H1 (cell line): ENCODE measurements at regions of chr10 and their contacts with region 1.

Region 1: DNA sequence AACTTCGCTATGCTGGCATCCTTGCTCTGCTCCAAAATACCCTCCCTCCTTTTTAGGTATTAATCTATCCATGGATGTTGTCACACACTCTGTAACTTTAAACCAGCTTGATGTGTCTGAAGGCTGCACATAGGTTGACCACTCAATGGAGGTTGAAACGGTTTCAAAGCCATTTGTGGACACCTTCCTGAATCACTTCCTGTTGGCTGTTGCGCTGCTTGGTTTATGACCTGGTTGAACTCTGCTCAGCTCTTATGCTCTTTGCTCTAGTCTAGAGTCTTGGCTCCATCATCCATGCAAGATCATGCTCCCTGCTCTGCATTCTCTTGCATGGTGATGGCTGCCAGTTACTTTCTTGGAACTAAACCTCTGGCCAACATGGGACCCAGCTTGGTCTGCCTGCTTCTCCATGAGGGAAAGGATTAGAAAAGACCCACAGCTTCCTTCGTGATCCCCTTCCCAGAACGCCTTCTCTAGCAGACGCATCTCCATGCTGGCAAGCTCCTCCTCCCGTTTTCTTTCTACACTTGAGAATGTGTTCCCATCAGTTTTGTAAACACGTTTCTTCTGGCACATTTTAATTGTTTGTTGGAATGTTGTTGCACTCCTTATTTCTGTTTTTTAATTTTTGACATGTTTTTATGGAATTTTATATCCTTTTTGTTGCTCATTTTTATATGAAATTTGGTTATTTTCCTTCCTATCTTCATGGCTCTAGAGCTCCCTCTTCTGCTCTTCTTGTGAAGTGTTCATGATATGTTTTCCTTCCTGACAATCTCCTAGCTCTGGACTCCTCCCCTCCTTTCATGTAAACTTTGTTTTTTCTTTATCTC is 149.8 kb downstream of the XPNPEP1 start:
- DNase-seq: no peak
- H3K4me3 ChIP-seq: no peak overlapping the region
- H3K27ac ChIP-seq: no peak overlapping the region
- H3K4me1 ChIP-seq: peaks cover 0 to 1% (median 0%) of the 10 kb centered on the region in 4 experiments; a peak in 2 of 7 replicates
- H3K27me3 ChIP-seq: no peaks in the 10 kb centered on the region
- CTCF ChIP-seq: peak in 2 of 3 experiments; percentile 41 to 49; a peak in 2 of 4 replicates
- EP300 ChIP-seq: no peak
- POLR2A ChIP-seq: no peak
- RAD21 ChIP-seq: peak; percentile 66 to 69

Region 2: GRCh38 chr10:109450702-109451101 is 322.8 kb before region 1 on chr10:
- CTCF ChIA-PET with region 1: interaction called, 16 read pairs
- POLR2A ChIA-PET with region 1: no interaction called
- DNase-seq: no peak
- H3K4me3 ChIP-seq: no peak overlapping the region
- H3K27ac ChIP-seq: no peak overlapping the region
- H3K4me1 ChIP-seq: no peaks in the 10 kb centered on the region
- H3K27me3 ChIP-seq: peaks cover 0 to 4% (median 3%) of the 10 kb centered on the region in 4 experiments; a peak in 5 of 7 replicates
- CTCF ChIP-seq: no peak
- EP300 ChIP-seq: no peak
- POLR2A ChIP-seq: no peak
- RAD21 ChIP-seq: no peak

Region 3: GRCh38 chr10:109456566-109457301 is 316.8 kb before region 1 on chr10:
- CTCF ChIA-PET with region 1: interaction called, 16 read pairs
- POLR2A ChIA-PET with region 1: no interaction called
- DNase-seq: peak in 1 of 2 experiments; percentile 75
- H3K4me3 ChIP-seq: peak overlapping the region; percentile 54 to 77 (median 62)
- H3K27ac ChIP-seq: no peak overlapping the region
- H3K4me1 ChIP-seq: no peaks in the 10 kb centered on the region; a peak in 1 of 7 replicates
- H3K27me3 ChIP-seq: peaks cover 2 to 25% (median 22%) of the 10 kb centered on the region in 4 experiments
- CTCF ChIP-seq: no peak
- EP300 ChIP-seq: 0 out of 3 replicates have a peak, but pooled peaks of 1 of the 2 experiments have one; percentile 6
- POLR2A ChIP-seq: no peak
- RAD21 ChIP-seq: peak in 1 of 2 experiments; percentile 10; a peak in 1 of 4 replicates

Region 4: DNA sequence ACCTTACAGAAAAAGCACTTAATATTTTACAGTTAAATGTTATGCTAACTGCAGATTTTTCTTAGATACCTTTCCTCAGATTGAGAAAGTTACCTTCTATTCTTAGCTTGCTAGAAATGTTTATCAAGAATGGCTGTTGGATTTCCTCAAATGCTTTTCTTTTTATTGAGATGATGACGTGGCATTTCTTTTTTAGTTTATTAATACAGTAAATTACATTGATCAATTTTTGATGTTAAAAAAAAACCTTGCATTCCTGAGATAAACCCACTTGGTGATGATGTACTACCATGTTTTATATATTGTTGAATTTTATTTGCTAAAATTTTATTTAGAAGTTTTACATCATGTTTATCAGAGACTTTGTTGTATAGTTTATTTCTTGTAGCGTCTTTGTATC is 58.6 kb before region 1 on chr10:
- CTCF ChIA-PET with region 1: interaction called, 10 read pairs
- POLR2A ChIA-PET with region 1: no interaction called
- DNase-seq: no peak
- H3K4me3 ChIP-seq: no peak overlapping the region
- H3K27ac ChIP-seq: no peak overlapping the region
- H3K4me1 ChIP-seq: no peaks in the 10 kb centered on the region
- H3K27me3 ChIP-seq: no peaks in the 10 kb centered on the region
- CTCF ChIP-seq: no peak
- EP300 ChIP-seq: no peak
- POLR2A ChIP-seq: no peak
- RAD21 ChIP-seq: no peak

Region 5: DNA sequence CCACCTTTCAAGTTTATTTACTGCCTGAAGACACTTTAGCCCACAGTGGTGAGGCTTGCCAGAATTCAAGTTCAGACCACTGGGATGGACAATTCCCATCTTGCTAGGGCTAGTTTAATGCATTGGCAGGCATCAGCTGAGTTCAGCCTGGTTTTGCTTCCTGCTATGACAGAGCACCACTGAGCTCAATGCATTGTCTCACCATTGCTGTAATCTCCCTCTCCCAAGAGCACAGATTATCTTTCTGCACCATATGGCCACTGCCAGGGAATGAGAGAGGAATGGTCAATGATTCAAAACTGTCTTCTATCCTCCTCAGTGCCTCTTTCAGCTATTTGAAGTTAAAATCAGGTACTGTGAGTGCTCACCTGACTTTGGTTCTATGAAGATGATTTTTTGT is 10.9 kb before region 1 on chr10:
- CTCF ChIA-PET with region 1: interaction called, 24 read pairs
- POLR2A ChIA-PET with region 1: interaction called, 3 read pairs
- DNase-seq: no peak
- H3K4me3 ChIP-seq: no peak overlapping the region
- H3K27ac ChIP-seq: no peak overlapping the region
- H3K4me1 ChIP-seq: no peaks in the 10 kb centered on the region
- H3K27me3 ChIP-seq: no peaks in the 10 kb centered on the region
- CTCF ChIP-seq: no peak
- EP300 ChIP-seq: no peak
- POLR2A ChIP-seq: no peak
- RAD21 ChIP-seq: no peak

Region 6: DNA sequence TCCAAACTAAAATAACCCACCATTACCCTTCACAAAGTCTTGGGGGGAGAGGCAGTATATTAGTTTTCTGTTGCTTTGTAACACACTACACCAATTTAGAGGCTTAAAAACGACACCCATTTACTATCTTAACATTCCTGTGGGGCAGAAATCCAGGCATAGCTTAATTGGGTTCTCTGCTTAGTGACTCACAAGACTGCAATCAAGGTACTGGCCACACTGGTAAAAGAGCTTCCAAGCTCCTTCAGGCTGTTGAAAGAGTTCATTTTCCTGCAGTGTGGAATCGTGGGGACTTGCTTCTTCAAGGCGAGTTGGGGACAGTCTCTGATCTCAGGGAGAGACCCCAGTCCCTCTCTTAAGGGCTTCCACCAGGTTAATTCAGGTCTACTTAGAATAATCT is 10.7 kb after region 1 on chr10:
- CTCF ChIA-PET with region 1: interaction called, 30 read pairs
- POLR2A ChIA-PET with region 1: no interaction called
- DNase-seq: no peak
- H3K4me3 ChIP-seq: no peak overlapping the region
- H3K27ac ChIP-seq: no peak overlapping the region
- H3K4me1 ChIP-seq: peaks cover 3 to 13% (median 6%) of the 10 kb centered on the region in 4 experiments; a peak in 6 of 7 replicates
- H3K27me3 ChIP-seq: no peaks in the 10 kb centered on the region; a peak in 1 of 7 replicates
- CTCF ChIP-seq: no peak
- EP300 ChIP-seq: no peak
- POLR2A ChIP-seq: no peak
- RAD21 ChIP-seq: no peak

Region 7: GRCh38 chr10:109819807-109820206 is 46.3 kb after region 1 on chr10:
- CTCF ChIA-PET with region 1: no interaction called
- POLR2A ChIA-PET with region 1: no interaction called
- DNase-seq: no peak
- H3K4me3 ChIP-seq: no peak overlapping the region
- H3K27ac ChIP-seq: no peak overlapping the region
- H3K4me1 ChIP-seq: 0 out of 7 replicates have a peak, but pooled peaks cover 0 to 2% (median 0%) of the 10 kb centered on the region in 4 experiments
- H3K27me3 ChIP-seq: no peaks in the 10 kb centered on the region
- CTCF ChIP-seq: no peak
- EP300 ChIP-seq: no peak
- POLR2A ChIP-seq: no peak
- RAD21 ChIP-seq: no peak

Region 8: DNA sequence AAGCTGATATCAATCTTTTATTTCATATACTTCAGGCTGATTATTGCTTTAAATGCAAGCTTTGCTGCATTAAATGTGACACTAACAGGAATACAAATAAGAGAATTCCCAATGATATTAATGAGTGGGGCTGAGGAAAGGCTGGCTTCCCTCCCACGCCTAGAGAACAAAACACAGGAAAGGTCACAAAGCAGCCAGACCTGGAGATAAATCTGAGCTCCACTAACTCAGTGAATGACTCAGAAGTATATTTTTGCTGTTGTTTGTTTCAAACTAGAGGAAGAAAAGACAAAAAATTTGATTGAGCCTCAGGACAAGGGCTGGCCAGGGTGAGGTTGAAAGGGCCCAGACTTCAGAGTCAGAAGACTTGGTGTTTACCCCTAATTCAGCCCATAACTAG is 61.8 kb after region 1 on chr10:
- CTCF ChIA-PET with region 1: no interaction called
- POLR2A ChIA-PET with region 1: no interaction called
- DNase-seq: no peak
- H3K4me3 ChIP-seq: no peak overlapping the region
- H3K27ac ChIP-seq: no peak overlapping the region
- H3K4me1 ChIP-seq: no peaks in the 10 kb centered on the region
- H3K27me3 ChIP-seq: no peaks in the 10 kb centered on the region
- CTCF ChIP-seq: no peak
- EP300 ChIP-seq: no peak
- POLR2A ChIP-seq: no peak
- RAD21 ChIP-seq: no peak

Region 9: DNA sequence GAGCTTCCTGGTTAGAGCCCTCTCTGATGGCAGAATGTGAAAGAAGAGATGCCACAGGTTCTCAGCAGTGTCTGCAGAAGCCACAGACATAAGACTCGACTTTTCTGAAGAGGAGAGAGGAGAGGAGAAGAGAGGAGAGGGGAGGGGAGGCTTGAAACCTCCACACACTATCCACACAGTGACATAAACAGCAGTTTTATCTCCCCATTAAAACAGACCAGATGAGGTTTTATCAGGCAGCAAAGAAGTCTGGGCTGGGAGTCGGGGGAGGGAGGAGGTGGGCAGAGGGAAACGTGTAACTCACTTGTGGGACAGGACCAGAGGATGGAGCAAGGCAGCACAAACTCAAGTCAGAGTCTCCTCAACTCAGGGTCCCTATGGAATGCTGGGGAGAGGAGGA is 73.3 kb after region 1 on chr10:
- CTCF ChIA-PET with region 1: interaction called, 11 read pairs
- POLR2A ChIA-PET with region 1: no interaction called
- DNase-seq: no peak
- H3K4me3 ChIP-seq: no peak overlapping the region
- H3K27ac ChIP-seq: no peak overlapping the region
- H3K4me1 ChIP-seq: no peaks in the 10 kb centered on the region
- H3K27me3 ChIP-seq: no peaks in the 10 kb centered on the region
- CTCF ChIP-seq: no peak
- EP300 ChIP-seq: no peak
- POLR2A ChIP-seq: no peak
- RAD21 ChIP-seq: no peak

Region 10: DNA sequence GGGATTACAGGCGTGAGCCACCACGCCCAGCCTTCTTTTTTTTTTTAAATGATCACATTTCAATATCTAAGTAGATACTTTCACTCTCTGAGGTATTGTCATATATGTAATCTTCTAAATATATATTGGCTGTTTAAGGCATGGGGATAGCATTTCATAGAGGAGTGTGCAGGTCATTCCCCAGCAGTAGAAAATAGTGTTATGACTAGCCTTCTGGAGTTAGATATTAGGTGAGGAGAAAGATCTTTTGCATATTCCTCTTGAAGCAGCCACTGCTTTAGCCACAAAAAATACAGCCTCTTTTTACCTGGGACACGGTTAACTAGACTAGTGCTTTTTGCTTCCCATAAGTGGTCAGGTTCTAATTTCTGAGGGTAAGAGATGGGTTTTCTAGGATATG is 263.1 kb after region 1 on chr10:
- CTCF ChIA-PET with region 1: no interaction called
- POLR2A ChIA-PET with region 1: no interaction called
- DNase-seq: no peak
- H3K4me3 ChIP-seq: no peak overlapping the region
- H3K27ac ChIP-seq: no peak overlapping the region
- H3K4me1 ChIP-seq: peaks cover 0 to 3% (median 0%) of the 10 kb centered on the region in 4 experiments; a peak in 2 of 7 replicates
- H3K27me3 ChIP-seq: no peaks in the 10 kb centered on the region
- CTCF ChIP-seq: no peak
- EP300 ChIP-seq: no peak
- POLR2A ChIP-seq: no peak
- RAD21 ChIP-seq: no peak